ENCODE measurements at regions of chr19 and their contacts with region 1.

Region 1: DNA sequence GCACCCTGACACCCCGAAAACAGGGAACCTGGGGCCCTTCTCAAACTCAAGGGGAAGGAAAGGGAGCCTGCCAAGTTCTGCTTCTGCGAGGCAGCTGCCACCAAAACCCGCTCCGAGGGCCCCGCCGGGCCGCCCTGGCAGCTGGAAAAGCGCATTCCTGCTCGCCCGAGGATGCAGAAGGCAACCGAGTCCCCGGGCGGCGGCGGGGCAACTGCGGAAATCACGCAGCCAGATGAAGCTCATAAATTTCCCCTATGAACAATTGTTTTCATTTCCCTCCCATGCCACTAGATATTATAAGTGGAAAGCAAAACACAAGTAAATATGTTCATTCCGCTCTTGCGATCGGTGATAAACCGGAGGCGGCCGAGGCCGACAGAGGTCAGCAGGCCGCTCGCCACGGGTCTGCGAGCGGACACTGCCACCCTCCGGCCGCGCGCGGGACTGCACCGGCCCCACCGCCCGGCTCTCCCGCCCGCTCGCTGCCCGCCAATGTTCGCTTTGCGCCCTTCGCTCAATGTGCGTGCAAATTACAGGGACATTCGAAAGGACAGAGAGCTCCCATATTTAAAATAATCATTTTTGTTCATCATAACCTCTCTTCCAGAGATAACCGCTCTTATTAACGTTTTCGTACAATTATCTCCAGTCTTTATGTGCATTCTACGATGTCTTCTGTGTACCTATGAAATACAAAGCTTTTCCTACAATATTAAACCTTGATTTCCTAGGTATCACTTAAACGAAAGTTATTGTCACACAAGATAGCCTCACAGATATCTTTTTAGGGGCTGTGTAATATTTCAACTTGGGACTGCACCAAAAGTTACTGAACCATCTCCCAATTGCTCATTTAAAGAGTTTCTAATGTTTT is 120.8 kb upstream of the ZNF507 start:
- DNase-seq: peak; percentile 61 to 80 (median 71)
- H3K4me3 ChIP-seq: no peak overlapping the region
- H3K27ac ChIP-seq: no peak overlapping the region
- H3K4me1 ChIP-seq: no peaks in the 10 kb centered on the region
- H3K27me3 ChIP-seq: peaks cover 3% of the 10 kb centered on the region
- CTCF ChIP-seq: peak; percentile 94

Region 2: GRCh38 chr19:30669329-30670010 is 1555.1 kb before region 1 on chr19:
- intact Hi-C with region 1: loop called (anchors 10 kb)
- DNase-seq: peak; percentile 72 to 86 (median 80)
- H3K4me3 ChIP-seq: no peak overlapping the region
- H3K27ac ChIP-seq: no peak overlapping the region
- H3K4me1 ChIP-seq: no peaks in the 10 kb centered on the region
- H3K27me3 ChIP-seq: no peaks in the 10 kb centered on the region
- CTCF ChIP-seq: peak; percentile 61

Region 3: GRCh38 chr19:32570081-32570785 is 345.6 kb after region 1 on chr19:
- intact Hi-C with region 1: no loop called
- DNase-seq: peak in 4 of 5 donors; percentile 57 to 81 (median 70)
- H3K4me3 ChIP-seq: no peak overlapping the region
- H3K27ac ChIP-seq: no peak overlapping the region
- H3K4me1 ChIP-seq: no peaks in the 10 kb centered on the region
- H3K27me3 ChIP-seq: no peaks in the 10 kb centered on the region
- CTCF ChIP-seq: peak; percentile 51